AG04450 (cell line): ENCODE measurements at regions of chr9 and their contacts with region 1.

Region 1: GRCh38 chr9:93003552-93004407 is 54.7 kb upstream of the SUSD3 start:
- DNase-seq: peak; percentile 1
- H3K4me3 ChIP-seq: no peak overlapping the region
- H3K27ac ChIP-seq: no peak overlapping the region
- H3K27me3 ChIP-seq: no peaks in the 10 kb centered on the region
- CTCF ChIP-seq: peak; percentile 69

Region 2: GRCh38 chr9:92359394-92359995 is 644.3 kb before region 1 on chr9:
- CTCF ChIA-PET with region 1: no interaction called
- POLR2A ChIA-PET with region 1: no interaction called
- DNase-seq: no peak
- H3K4me3 ChIP-seq: no peak overlapping the region
- H3K27ac ChIP-seq: no peak overlapping the region
- H3K27me3 ChIP-seq: no peaks in the 10 kb centered on the region
- CTCF ChIP-seq: no peak

Region 3: GRCh38 chr9:92992549-92992948 is 11.2 kb before region 1 on chr9:
- CTCF ChIA-PET with region 1: interaction called, 11 read pairs
- POLR2A ChIA-PET with region 1: no interaction called
- DNase-seq: no peak
- H3K4me3 ChIP-seq: no peak overlapping the region
- H3K27ac ChIP-seq: no peak overlapping the region
- H3K27me3 ChIP-seq: no peaks in the 10 kb centered on the region
- CTCF ChIP-seq: no peak

Region 4: DNA sequence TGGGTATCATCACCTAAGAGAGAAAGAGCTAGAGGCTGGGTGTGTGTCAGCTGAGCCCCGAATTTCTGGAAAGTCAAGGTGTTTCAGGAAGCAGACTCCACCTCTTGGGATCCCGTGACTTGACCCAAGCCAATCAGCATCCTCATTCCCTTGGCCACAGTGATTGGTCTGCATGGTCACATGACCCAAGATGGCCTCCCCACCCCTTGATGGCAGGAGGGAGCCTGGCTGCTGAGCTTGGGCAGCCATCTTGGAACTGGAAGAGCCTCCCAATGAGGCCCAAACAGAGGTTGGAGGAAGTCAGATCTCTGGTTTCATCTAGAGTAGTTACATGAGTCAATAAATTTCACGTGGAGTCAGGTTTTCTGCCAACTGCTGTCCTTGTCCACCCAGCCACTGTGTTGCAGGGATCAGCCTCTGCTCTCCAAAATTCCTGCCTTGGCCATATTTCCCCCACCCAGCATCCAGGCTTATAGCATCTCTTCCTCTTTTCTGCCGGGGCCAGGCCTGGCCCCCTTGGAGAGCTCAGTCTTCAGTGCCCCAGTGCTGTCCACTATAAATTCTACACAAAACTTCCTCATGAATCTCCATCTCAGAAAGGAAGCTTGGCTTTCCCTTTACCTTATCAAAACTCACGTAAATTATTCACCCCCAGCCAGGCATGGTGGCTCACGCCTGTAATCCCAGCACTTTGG is 37.5 kb after region 1 on chr9:
- CTCF ChIA-PET with region 1: no interaction called
- POLR2A ChIA-PET with region 1: no interaction called
- DNase-seq: no peak
- H3K4me3 ChIP-seq: no peak overlapping the region
- H3K27ac ChIP-seq: no peak overlapping the region
- H3K27me3 ChIP-seq: no peaks in the 10 kb centered on the region
- CTCF ChIP-seq: no peak

Region 5: GRCh38 chr9:93302551-93303257 is 298.9 kb after region 1 on chr9:
- CTCF ChIA-PET with region 1: interaction called, 27 read pairs
- POLR2A ChIA-PET with region 1: no interaction called
- DNase-seq: no peak
- H3K4me3 ChIP-seq: no peak overlapping the region
- H3K27ac ChIP-seq: no peak overlapping the region
- H3K27me3 ChIP-seq: peaks cover 7% of the 10 kb centered on the region
- CTCF ChIP-seq: peak; percentile 73